GM12878 (cell line): ENCODE measurements at regions of chr4 and their contacts with region 1.

Region 1: GRCh38 chr4:158729716-158730559 is 6.7 kb upstream of the PPID start:
- DNase-seq: peak; percentile 44
- ATAC-seq: peak; percentile 97
- H3K4me3 ChIP-seq: no peak overlapping the region
- H3K27ac ChIP-seq: no peak overlapping the region
- H3K4me1 ChIP-seq: no peaks in the 10 kb centered on the region
- H3K27me3 ChIP-seq: peaks cover 0 to 2% of the 10 kb centered on the region in 2 experiments; a peak in 1 of 4 replicates
- CTCF ChIP-seq: peak; percentile 81 to 97 (median 85)
- EP300 ChIP-seq: no peak
- POLR2A ChIP-seq: no peak
- RAD21 ChIP-seq: peak; percentile 85

Region 2: GRCh38 chr4:159175085-159175988 is 445.4 kb after region 1 on chr4:
- CTCF ChIA-PET with region 1: no interaction called
- POLR2A ChIA-PET with region 1: no interaction called
- RAD21 ChIA-PET with region 1: no interaction called
- SMC1A ChIA-PET with region 1: no interaction called
- in situ Hi-C with region 1: no loop called
- intact Hi-C with region 1: loop called (anchors 5 kb)
- DNase-seq: peak; percentile 73
- ATAC-seq: peak; percentile 82
- H3K4me3 ChIP-seq: peak overlapping the region; percentile 60
- H3K27ac ChIP-seq: no peak overlapping the region; the same call in 1 of the 2 replicates
- H3K4me1 ChIP-seq: peaks cover 58% of the 10 kb centered on the region
- H3K27me3 ChIP-seq: no peaks in the 10 kb centered on the region
- CTCF ChIP-seq: peak; percentile 59 to 85 (median 75)
- EP300 ChIP-seq: no peak
- POLR2A ChIP-seq: no peak
- RAD21 ChIP-seq: peak; percentile 98